AG04449 (cell line): ENCODE measurements at regions of chr18 and their contacts with region 1.

Region 1: GRCh38 chr18:77207540-77207939 is 42.1 kb upstream of the GALR1 start:
- DNase-seq: peak; percentile 24
- H3K4me3 ChIP-seq: no peak overlapping the region
- CTCF ChIP-seq: peak; percentile 82

Region 2: GRCh38 chr18:77013811-77014521 is 193.6 kb before region 1 on chr18:
- CTCF ChIA-PET with region 1: interaction called, 28 read pairs
- POLR2A ChIA-PET with region 1: no interaction called
- DNase-seq: no peak
- H3K4me3 ChIP-seq: no peak overlapping the region
- CTCF ChIP-seq: no peak

Region 3: DNA sequence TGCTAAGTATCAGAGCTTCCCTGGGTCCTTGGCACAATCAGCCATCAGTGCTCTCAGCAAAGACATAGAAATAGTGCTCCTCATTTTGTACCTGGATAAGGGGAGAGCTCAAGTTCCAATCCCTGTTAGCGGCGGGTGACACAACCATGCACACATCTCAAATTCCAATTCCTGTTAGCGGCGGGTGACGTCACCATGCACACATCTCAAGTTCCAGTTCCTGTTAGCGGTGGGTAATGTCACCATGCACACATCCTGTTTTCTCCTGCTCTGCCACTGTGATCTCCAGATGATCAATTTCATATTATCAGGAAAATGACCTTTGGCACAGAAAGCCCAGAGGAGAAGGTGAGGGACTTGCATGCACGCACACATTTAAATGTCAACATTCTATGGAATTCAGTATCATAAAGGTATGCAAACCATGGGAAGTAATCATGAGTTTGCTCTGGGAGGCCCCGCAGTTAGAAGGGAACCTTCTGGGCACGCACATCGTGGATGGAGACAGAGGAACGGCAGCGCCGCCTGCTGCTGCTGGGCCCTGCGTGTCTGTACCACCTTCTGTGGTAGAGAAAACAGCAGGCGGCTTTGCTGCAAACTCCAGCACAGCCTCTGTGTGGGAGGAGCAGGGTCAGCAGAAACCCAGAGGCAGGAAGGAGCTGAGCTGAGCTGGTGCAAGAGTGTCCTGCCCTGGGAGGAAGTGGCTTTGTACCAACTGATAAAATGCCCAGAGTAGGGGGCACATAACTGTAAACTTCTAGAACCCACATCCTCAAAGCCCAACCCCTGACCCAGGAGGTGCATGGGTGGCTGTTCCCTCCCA is 152.7 kb before region 1 on chr18:
- CTCF ChIA-PET with region 1: interaction called, 12 read pairs
- POLR2A ChIA-PET with region 1: no interaction called
- DNase-seq: no peak
- H3K4me3 ChIP-seq: no peak overlapping the region
- CTCF ChIP-seq: peak; percentile 81

Region 4: GRCh38 chr18:77067291-77068061 is 140.1 kb before region 1 on chr18:
- CTCF ChIA-PET with region 1: interaction called, 36 read pairs
- POLR2A ChIA-PET with region 1: no interaction called
- DNase-seq: no peak
- H3K4me3 ChIP-seq: no peak overlapping the region
- CTCF ChIP-seq: no peak

Region 5: GRCh38 chr18:77197073-77197472 is 10.5 kb before region 1 on chr18:
- CTCF ChIA-PET with region 1: interaction called, 21 read pairs
- POLR2A ChIA-PET with region 1: no interaction called
- DNase-seq: no peak
- H3K4me3 ChIP-seq: no peak overlapping the region
- CTCF ChIP-seq: no peak

Region 6: DNA sequence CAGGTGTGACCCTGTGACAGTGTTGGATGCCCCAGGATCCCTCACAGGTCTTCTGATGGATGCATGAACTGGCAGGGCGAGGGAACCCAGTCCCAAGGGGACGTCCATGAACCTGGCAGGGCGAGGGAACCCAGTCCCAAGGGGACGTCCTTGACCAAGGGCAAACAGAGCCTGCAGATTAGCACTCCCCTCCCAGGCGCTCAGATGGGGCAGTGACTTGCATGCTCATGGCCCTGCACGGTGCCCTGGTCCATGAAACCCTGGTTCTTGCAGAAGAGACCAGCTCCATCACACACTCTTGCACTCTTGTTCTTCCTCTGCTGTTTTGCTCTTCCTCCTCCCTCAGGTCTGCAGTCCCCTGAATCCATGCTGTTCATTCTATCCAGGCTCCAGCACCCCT is 234.9 kb after region 1 on chr18:
- CTCF ChIA-PET with region 1: no interaction called
- POLR2A ChIA-PET with region 1: no interaction called
- DNase-seq: no peak
- H3K4me3 ChIP-seq: no peak overlapping the region
- CTCF ChIP-seq: no peak